ENCODE measurements at regions of chr11 and their contacts with region 1.

Region 1: DNA sequence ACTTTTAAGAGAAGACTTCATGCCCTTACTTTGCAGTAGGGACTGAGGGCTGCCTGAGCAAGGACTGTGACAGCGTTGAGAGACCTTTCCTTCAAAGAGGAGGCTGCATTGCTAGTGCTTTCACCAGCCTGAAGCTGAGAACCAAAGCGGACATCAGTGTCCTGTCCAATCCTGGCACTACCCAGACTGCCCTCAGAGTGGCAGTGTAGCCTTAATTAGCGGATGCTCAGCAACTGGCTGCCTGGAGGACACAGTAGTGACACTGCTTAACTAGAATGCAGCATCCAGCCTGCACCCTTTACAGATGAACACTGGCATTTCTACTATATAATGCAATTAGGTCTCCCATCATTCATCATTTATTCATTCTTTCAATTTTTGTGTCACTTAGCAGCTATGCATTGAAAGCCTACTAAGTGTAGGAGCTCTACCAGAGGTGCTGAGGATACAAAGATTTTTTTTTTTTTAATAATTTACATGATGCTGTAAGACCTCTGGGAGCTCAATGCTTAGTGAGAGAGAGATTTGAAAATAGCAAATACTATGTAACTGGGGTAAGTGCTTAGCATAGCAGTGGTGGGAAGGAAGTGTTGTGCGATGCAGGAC is 36.9 kb upstream of the SLC36A4 start:
- DNase-seq: peak; percentile 30
- H3K4me3 ChIP-seq: no peak overlapping the region
- H3K27ac ChIP-seq: no peak overlapping the region
- H3K27me3 ChIP-seq: peaks cover 9% of the 10 kb centered on the region
- CTCF ChIP-seq: peak; percentile 94

Region 2: DNA sequence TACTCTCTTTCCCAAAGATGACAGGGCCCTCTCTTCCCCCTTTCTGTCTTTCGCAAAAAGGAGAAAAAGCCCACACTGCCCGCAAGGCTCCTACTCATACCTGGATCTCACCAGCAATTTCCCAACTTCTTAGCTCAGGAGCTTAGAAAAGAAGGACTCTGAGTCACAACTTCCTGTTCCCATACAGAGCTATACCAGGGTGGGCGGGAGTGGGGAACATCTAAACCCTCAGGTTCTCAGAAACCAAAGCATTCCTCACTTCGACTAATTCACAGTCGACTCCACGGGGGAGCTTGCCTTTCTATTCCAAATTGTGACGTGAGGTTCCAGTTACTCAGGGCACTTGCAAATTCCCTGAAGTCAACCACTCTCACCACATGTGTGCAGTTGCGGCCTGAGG is 203.3 kb before region 1 on chr11:
- CTCF ChIA-PET with region 1: no interaction called
- POLR2A ChIA-PET with region 1: no interaction called
- DNase-seq: no peak
- H3K4me3 ChIP-seq: no peak overlapping the region
- H3K27ac ChIP-seq: no peak overlapping the region
- H3K27me3 ChIP-seq: no peaks in the 10 kb centered on the region
- CTCF ChIP-seq: no peak

Region 3: GRCh38 chr11:93248602-93249001 is 13.9 kb after region 1 on chr11:
- CTCF ChIA-PET with region 1: interaction called, 11 read pairs
- POLR2A ChIA-PET with region 1: no interaction called
- DNase-seq: no peak
- H3K4me3 ChIP-seq: no peak overlapping the region
- H3K27ac ChIP-seq: no peak overlapping the region
- H3K27me3 ChIP-seq: no peaks in the 10 kb centered on the region
- CTCF ChIP-seq: peak; percentile 52

Region 4: DNA sequence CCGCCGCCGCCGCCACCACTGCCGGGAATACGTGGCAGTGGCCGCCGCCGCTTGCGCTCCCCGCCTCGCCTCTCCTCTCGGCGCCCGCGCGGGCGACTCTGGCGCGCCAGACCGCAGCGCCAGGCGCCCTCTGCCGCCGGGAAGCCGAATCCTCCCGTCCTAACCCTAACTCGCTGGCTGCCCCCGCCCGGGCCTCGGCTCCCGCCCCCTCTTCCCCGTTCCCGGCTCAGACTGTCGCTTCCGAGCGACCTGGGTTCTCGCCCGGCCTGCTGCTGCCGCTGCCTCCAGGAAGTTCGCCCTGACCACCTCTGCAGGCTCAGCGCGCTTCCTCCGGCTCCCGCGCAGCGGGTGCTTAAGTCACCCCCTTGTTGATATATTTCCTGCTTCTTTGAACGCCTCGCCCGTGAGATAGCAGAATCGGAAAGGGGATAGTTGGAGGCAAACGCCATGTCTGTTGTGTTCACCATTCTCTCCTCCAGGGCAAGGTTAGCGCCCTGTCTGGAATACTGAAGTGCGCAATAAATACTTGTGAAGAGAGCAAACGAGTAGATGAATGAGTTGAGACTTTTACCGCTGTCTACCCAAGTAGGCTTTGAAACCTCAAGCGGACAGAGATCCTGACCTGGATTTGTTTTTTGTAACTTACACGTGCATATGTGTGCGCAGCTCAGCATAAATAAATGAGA is 308.7 kb after region 1 on chr11 and contains the start of gene SMCO4:
- CTCF ChIA-PET with region 1: interaction called, 22 read pairs
- POLR2A ChIA-PET with region 1: no interaction called
- DNase-seq: no peak
- H3K4me3 ChIP-seq: peak within 1 kb of the TSS; percentile 70
- H3K27ac ChIP-seq: peak within 1 kb of the TSS; percentile 31
- H3K27me3 ChIP-seq: peaks cover 21% of the 10 kb centered on the region
- CTCF ChIP-seq: peak; percentile 68
- polyA plus RNA-seq, gene SMCO4: 8.6 and 9.4 TPM in 2 replicates

Region 5: GRCh38 chr11:93652161-93652597 is 417.5 kb after region 1 on chr11:
- CTCF ChIA-PET with region 1: interaction called, 111 read pairs
- POLR2A ChIA-PET with region 1: no interaction called
- DNase-seq: no peak
- H3K4me3 ChIP-seq: no peak overlapping the region
- H3K27ac ChIP-seq: no peak overlapping the region
- H3K27me3 ChIP-seq: peaks cover 18% of the 10 kb centered on the region
- CTCF ChIP-seq: peak; percentile 67

Region 6: GRCh38 chr11:94028436-94028835 is 793.7 kb after region 1 on chr11:
- CTCF ChIA-PET with region 1: no interaction called
- POLR2A ChIA-PET with region 1: no interaction called
- DNase-seq: peak; percentile 70
- H3K4me3 ChIP-seq: no peak overlapping the region
- H3K27ac ChIP-seq: peak overlapping the region; percentile 13
- H3K27me3 ChIP-seq: no peaks in the 10 kb centered on the region
- CTCF ChIP-seq: no peak

Measured in AG04450 (cell line).